Common myeloid progenitor, CD34-positive (primary cell): ENCODE measurements at regions of chr5 and their contacts with region 1.

Region 1: GRCh38 chr5:146718609-146719008 is 159.9 kb downstream of the PPP2R2B start:
- DNase-seq: no peak
- H3K4me3 ChIP-seq: no peak overlapping the region
- H3K27ac ChIP-seq: no peak overlapping the region
- H3K4me1 ChIP-seq: peaks cover 0 to 18% (median 11%) of the 10 kb centered on the region in 4 experiments
- H3K27me3 ChIP-seq: no peaks in the 10 kb centered on the region

Region 2: DNA sequence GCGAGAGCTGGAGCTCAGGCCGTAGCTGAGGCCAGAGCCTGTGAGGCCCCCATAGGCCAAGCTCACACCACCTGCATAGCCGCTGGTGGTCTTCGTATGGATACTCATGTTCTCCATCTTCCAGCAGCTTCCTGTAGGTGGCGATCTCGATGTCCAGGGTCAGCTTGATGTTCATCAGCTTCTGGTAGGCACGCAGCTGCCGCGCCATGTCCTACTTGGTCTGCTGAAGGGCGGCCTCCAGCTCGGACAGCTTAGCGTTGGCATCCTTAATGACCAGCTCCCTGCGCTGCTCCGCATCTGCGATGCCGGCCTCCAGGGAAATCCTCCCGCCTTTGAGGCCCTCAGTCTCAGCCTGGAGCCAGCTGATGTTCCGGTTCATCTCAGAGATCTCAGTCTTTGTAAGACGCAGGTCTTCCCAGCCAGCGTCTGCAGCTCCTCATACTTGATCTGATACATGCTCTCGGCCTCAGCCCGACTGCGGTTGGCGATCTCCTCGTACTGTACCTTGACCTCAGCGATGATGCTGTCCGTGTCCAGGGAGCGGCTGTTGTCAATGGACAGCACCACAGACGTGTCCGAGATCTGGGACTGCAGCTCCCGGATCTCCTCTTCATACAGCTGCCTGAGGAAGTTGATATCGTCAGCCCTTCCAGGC is 12.2 kb before region 1 on chr5:
- CTCF ChIA-PET with region 1: interaction called, 19 read pairs
- POLR2A ChIA-PET with region 1: no interaction called
- DNase-seq: no peak
- H3K4me3 ChIP-seq: no peak overlapping the region
- H3K27ac ChIP-seq: no peak overlapping the region
- H3K4me1 ChIP-seq: peaks cover 2 to 4% (median 3%) of the 10 kb centered on the region in 4 experiments
- H3K27me3 ChIP-seq: no peaks in the 10 kb centered on the region

Region 3: GRCh38 chr5:146813346-146814157 is 94.9 kb after region 1 on chr5:
- CTCF ChIA-PET with region 1: no interaction called
- POLR2A ChIA-PET with region 1: no interaction called
- DNase-seq: peak; percentile 31 to 69 (median 64)
- H3K4me3 ChIP-seq: peak overlapping the region in 1 of 7 experiments; percentile 16
- H3K27ac ChIP-seq: no peak overlapping the region
- H3K4me1 ChIP-seq: peaks cover 0 to 31% (median 14%) of the 10 kb centered on the region in 4 experiments
- H3K27me3 ChIP-seq: no peaks in the 10 kb centered on the region

Region 4: DNA sequence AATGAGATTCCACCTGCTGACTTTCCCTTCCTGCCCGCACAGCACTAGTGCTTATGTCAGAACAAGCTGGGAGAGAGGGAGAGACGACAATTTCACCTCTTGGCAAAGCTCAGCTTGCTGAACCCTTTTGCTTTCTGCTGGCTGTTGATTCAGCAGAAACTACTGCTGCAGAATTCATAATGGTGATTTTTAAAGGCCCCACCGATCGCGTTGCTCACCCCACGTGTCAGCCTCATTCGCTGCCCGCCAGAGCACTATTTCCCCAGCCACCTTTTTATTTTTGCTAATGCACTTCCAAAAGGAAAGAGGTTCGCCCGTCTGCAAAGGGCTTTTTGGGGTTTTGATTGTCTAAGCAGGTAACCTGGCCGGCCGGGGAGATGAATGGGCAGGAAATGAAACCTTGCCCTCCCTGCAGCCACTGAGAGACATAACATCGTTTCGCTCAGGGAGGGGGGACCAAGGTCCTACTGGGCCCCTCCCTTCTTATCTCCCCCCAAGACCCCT is 158.6 kb after region 1 on chr5:
- CTCF ChIA-PET with region 1: no interaction called
- POLR2A ChIA-PET with region 1: no interaction called
- DNase-seq: peak in 2 of 3 donors; percentile 15 to 43
- H3K4me3 ChIP-seq: peak overlapping the region; percentile 51 to 90 (median 76)
- H3K27ac ChIP-seq: no peak overlapping the region
- H3K4me1 ChIP-seq: peaks cover 0 to 21% (median 15%) of the 10 kb centered on the region in 4 experiments
- H3K27me3 ChIP-seq: peaks cover 0 to 16% (median 7%) of the 10 kb centered on the region in 5 experiments

Region 5: GRCh38 chr5:147751156-147751825 is 1032.7 kb after region 1 on chr5:
- CTCF ChIA-PET with region 1: no interaction called
- POLR2A ChIA-PET with region 1: no interaction called
- DNase-seq: no peak
- H3K4me3 ChIP-seq: no peak overlapping the region
- H3K27ac ChIP-seq: peak overlapping the region in 1 of 2 experiments; percentile 33
- H3K4me1 ChIP-seq: no peaks in the 10 kb centered on the region
- H3K27me3 ChIP-seq: no peaks in the 10 kb centered on the region